Activated T-helper 1 cell treated with anti-CD3 and anti-CD28 coated beads, Interleukin-12 subunit alpha, Interleukin-12 subunit beta, Interleukin-2, Interleukin-4 antibody, amounts not matched to agents 30 ng/mL and 10 ng/mL and 1 ng/mL, durations not matched to agents 14 hours and 24 hours and 36 hours (primary cell): ENCODE measurements at regions of chr12 and their contacts with region 1.

Region 1: GRCh38 chr12:12696562-12697383 is 790 bp upstream of the GPR19 start:
- DNase-seq: peak; percentile 91
- H3K4me3 Mint-ChIP-seq: peak overlapping the region; percentile 96
- H3K27ac Mint-ChIP-seq: peak overlapping the region; percentile 89
- H3K4me1 Mint-ChIP-seq: peaks cover 49% of the 10 kb centered on the region
- H3K27me3 Mint-ChIP-seq: no peaks in the 10 kb centered on the region

Region 2: DNA sequence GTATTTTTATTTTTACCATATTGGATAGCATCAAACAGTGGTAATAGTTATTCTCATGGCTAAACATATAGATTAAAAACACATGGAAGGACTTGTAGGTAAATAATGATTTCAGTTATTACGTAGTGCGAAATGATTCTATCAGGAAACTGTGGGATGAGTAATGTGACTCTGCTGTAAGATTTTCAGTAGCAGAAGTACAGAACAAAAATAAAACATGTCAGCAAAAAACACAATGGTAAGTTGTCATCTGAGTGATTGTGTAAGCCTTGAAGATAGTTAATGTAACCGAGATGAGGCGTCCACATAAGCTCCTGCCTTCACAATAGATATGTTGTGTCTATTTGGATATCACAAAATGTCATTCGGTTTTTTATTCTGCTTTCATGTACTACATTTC is 240.1 kb before region 1 on chr12:
- intact Hi-C with region 1: loop called (anchors 5 kb)
- DNase-seq: no peak
- H3K4me3 Mint-ChIP-seq: peak overlapping the region; percentile 58
- H3K27ac Mint-ChIP-seq: peak overlapping the region; percentile 88
- H3K4me1 Mint-ChIP-seq: peaks cover 60% of the 10 kb centered on the region
- H3K27me3 Mint-ChIP-seq: no peaks in the 10 kb centered on the region

Region 3: DNA sequence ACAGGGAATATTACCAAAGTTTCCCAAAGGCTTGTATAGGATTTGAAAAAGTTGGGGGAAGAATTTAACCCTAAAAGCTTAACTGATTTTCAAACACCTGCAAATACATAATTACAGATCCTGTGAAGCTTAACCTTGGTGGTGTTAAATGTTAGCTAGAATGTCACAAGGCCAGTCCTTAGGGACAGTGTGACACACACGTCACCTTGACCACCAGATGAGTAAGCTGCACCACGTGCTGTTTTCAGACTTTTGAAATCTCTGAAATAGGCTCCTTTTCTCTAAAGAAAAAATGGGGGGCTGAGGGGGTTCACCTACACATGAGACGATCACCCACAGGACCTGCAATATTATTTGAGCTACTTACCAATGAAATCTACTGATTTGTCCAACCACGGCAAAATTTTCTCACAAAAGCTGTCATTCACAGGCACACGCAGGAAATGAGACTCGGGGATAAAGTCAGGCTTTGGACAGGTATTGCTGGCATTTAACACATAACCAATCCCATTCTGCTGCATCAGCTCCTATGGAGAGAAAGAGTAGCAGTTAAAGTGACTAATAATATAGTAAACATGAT is 210.0 kb before region 1 on chr12:
- intact Hi-C with region 1: loop called (anchors 2 kb)
- DNase-seq: no peak
- H3K4me3 Mint-ChIP-seq: no peak overlapping the region
- H3K27ac Mint-ChIP-seq: peak overlapping the region; percentile 59
- H3K4me1 Mint-ChIP-seq: peaks cover 55% of the 10 kb centered on the region
- H3K27me3 Mint-ChIP-seq: no peaks in the 10 kb centered on the region

Region 4: GRCh38 chr12:12505544-12506495 is 191.0 kb before region 1 on chr12:
- intact Hi-C with region 1: loop called (anchors 2 kb)
- DNase-seq: peak; percentile 17
- H3K4me3 Mint-ChIP-seq: peak overlapping the region; percentile 63
- H3K27ac Mint-ChIP-seq: peak overlapping the region; percentile 93
- H3K4me1 Mint-ChIP-seq: peaks cover 53% of the 10 kb centered on the region
- H3K27me3 Mint-ChIP-seq: no peaks in the 10 kb centered on the region

Region 5: DNA sequence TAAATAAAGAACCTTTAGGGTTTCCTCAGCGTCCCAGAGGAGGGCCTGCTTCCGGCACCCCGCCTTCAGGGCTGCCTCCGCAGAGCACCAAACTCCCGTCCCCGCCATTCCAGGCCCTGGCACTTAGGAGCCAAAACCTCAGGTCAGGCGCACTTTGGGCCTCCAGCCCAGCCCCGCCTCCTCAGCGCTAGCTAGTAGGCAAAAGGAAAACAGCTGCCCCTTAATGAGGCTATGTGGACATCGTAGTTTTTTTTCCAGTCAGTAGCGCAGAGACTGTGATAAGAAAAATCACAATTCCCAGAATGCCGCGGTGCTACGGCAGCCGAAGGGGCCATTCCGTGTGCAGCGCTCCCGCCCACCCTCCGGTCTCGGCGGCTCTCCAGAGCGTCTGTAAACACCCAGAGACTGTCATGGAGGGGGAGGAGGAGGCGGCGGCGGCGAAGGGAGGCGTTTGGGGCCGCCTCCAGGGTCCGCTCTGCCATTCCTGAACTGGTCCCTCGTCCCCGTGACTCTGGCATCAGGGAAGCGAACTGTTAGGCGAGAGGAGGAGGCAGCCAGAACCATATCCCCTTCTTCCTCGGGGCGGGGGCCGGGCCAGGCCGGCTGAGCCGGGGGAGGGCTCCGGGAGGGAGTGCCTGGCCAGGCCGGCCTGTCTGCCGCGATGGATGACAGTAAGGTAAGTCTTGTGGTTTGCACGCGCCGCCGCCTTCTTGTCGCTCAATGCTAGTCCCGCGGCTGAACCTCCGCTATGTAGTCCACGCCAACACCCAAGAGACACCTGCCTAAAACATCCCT is 85.1 kb before region 1 on chr12 and contains the start of gene CREBL2:
- intact Hi-C with region 1: loop called (anchors 1 kb)
- DNase-seq: peak; percentile 78
- H3K4me3 Mint-ChIP-seq: peak within 1 kb of the TSS; percentile 95
- H3K27ac Mint-ChIP-seq: peak within 1 kb of the TSS; percentile 96
- H3K4me1 Mint-ChIP-seq: peaks cover 47% of the 10 kb centered on the region
- H3K27me3 Mint-ChIP-seq: no peaks in the 10 kb centered on the region
- total RNA-seq, gene CREBL2: 16.7 and 17.9 TPM in 2 replicates

Region 6: DNA sequence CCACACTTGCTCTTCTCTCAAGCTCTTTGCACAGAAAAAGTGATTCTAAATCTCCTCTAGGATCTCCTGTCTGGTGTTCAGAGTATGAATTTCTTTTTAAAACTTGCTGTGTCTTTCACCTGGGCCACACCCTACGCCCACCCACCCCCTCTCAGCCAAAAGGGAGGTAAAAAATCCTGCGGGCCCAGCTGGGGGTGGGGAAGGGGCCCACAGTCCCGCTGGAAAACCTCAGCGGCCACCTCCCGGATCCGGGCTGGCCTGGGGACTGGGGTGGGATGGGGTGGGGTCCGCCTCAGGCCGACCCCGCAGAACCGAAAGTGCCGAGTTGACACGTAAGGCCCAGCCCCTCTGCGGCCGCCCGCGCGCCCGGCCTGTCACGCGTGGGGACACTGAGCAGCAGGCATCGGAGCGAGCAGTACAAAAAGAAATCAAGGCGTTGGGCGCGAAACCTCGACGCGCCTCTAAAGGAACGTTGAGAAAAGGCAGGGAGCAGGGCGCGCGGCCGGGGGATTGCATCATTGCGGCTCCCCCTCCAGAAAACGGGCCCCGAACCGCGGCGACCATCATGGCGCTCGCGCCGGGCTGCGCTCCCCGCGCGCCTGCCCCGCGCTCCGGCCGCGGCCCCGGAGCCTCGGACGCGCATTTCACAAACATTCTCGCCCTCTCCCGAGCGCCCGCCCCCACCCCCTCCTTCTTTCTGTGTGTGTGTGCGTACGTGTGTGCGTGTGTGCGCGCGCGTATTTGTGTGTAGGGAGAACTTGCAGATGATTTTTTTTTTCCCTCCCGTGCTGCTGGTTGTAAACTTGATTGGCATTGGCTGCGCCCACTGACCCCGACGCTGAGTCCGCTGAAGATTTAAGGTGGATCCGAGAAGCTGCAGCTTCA is 28.1 kb after region 1 on chr12:
- intact Hi-C with region 1: loop called (anchors 1 kb)
- DNase-seq: peak; percentile 88
- H3K4me3 Mint-ChIP-seq: peak overlapping the region; percentile 90
- H3K27ac Mint-ChIP-seq: peak overlapping the region; percentile 96
- H3K4me1 Mint-ChIP-seq: peaks cover 56% of the 10 kb centered on the region
- H3K27me3 Mint-ChIP-seq: peaks cover 3% of the 10 kb centered on the region